ENCODE measurements at regions of chr5 and their contacts with region 1.

Region 1: GRCh38 chr5:142713121-142713706 is 27.3 kb upstream of the FGF1 start:
- DNase-seq: peak; percentile 61
- ATAC-seq: peak; percentile 99
- H3K4me3 ChIP-seq: peak overlapping the region; percentile 53
- H3K27ac ChIP-seq: peak overlapping the region; percentile 50
- H3K4me1 ChIP-seq: no peaks in the 10 kb centered on the region
- H3K27me3 ChIP-seq: no peaks in the 10 kb centered on the region; a peak in 1 of 4 replicates
- CTCF ChIP-seq: peak; percentile 86 to 94 (median 91)
- EP300 ChIP-seq: no peak
- POLR2A ChIP-seq: no peak
- RAD21 ChIP-seq: peak; percentile 43

Region 2: GRCh38 chr5:142145106-142145900 is 567.9 kb before region 1 on chr5:
- CTCF ChIA-PET with region 1: interaction called, 10 read pairs
- POLR2A ChIA-PET with region 1: no interaction called
- RAD21 ChIA-PET with region 1: no interaction called
- SMC1A ChIA-PET with region 1: no interaction called
- in situ Hi-C with region 1: no loop called
- intact Hi-C with region 1: loop called (anchors 5 kb)
- DNase-seq: peak; percentile 11
- ATAC-seq: peak; percentile 96
- H3K4me3 ChIP-seq: no peak overlapping the region
- H3K27ac ChIP-seq: no peak overlapping the region
- H3K4me1 ChIP-seq: no peaks in the 10 kb centered on the region
- H3K27me3 ChIP-seq: no peaks in the 10 kb centered on the region
- CTCF ChIP-seq: peak; percentile 66 to 79 (median 70)
- EP300 ChIP-seq: no peak
- POLR2A ChIP-seq: no peak
- RAD21 ChIP-seq: peak; percentile 54

Region 3: GRCh38 chr5:142611154-142611553 is 102.1 kb before region 1 on chr5:
- CTCF ChIA-PET with region 1: no interaction called
- POLR2A ChIA-PET with region 1: no interaction called
- RAD21 ChIA-PET with region 1: no interaction called
- SMC1A ChIA-PET with region 1: no interaction called
- in situ Hi-C with region 1: no loop called
- intact Hi-C with region 1: loop called (anchors 5 kb)
- DNase-seq: no peak
- ATAC-seq: peak; percentile 97
- H3K4me3 ChIP-seq: no peak overlapping the region
- H3K27ac ChIP-seq: no peak overlapping the region
- H3K4me1 ChIP-seq: no peaks in the 10 kb centered on the region
- H3K27me3 ChIP-seq: no peaks in the 10 kb centered on the region; a peak in 4 of 4 replicates
- CTCF ChIP-seq: peak; percentile 68 to 94 (median 71)
- EP300 ChIP-seq: no peak
- POLR2A ChIP-seq: no peak
- RAD21 ChIP-seq: peak; percentile 78

Region 4: GRCh38 chr5:142748568-142749249 is 35.5 kb after region 1 on chr5:
- CTCF ChIA-PET with region 1: interaction called, 43 read pairs
- POLR2A ChIA-PET with region 1: no interaction called
- RAD21 ChIA-PET with region 1: interaction called, 11 read pairs
- SMC1A ChIA-PET with region 1: interaction called, 32 read pairs
- in situ Hi-C with region 1: no loop called
- intact Hi-C with region 1: no loop called
- DNase-seq: no peak
- ATAC-seq: peak; percentile 84
- H3K4me3 ChIP-seq: no peak overlapping the region
- H3K27ac ChIP-seq: no peak overlapping the region
- H3K4me1 ChIP-seq: no peaks in the 10 kb centered on the region
- H3K27me3 ChIP-seq: no peaks in the 10 kb centered on the region; a peak in 2 of 4 replicates
- CTCF ChIP-seq: peak; percentile 67 to 83 (median 67)
- EP300 ChIP-seq: no peak
- POLR2A ChIP-seq: no peak
- RAD21 ChIP-seq: peak; percentile 72

Region 5: DNA sequence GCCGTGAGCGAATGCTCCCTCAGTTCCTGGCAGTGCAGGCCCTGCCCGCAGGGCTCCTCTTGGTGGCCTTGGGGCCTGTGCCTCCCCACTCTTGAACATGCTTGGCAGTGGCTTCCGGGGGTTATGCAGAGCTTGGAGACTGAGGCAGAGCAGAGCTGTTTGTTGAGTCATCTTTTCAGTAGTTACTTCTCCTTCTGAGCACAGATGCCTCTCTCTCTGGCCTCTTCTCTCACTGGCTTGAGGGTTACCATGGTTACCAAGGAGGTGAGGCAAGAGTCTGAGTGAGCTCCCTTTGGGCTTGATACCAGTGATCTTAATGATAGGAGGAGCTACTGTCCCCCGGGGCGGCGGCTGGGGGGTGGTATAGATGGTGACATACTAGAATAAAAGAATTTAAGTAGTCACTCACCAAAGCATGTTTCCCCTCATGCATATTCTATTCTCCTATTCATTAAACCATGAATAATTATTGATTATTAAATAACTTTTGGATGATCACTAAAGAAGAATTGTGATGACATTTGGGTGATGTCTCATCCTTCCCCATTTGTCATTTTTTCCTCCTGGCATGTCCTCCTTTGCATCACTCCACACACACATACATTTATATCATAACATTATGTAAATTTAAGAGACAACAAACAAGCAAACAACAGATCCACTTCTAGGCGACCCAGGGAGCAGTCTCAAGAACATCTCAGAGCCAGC is 168.0 kb after region 1 on chr5:
- CTCF ChIA-PET with region 1: interaction called, 243 read pairs
- POLR2A ChIA-PET with region 1: no interaction called
- RAD21 ChIA-PET with region 1: interaction called, 7 read pairs
- SMC1A ChIA-PET with region 1: interaction called, 21 read pairs
- in situ Hi-C with region 1: no loop called
- intact Hi-C with region 1: loop called (anchors 1 kb)
- DNase-seq: no peak
- ATAC-seq: peak; percentile 55
- H3K4me3 ChIP-seq: no peak overlapping the region
- H3K27ac ChIP-seq: no peak overlapping the region
- H3K4me1 ChIP-seq: no peaks in the 10 kb centered on the region
- H3K27me3 ChIP-seq: no peaks in the 10 kb centered on the region
- CTCF ChIP-seq: no peak
- EP300 ChIP-seq: no peak
- POLR2A ChIP-seq: no peak
- RAD21 ChIP-seq: no peak